ENCODE measurements at regions of chr18 and their contacts with region 1.

Region 1: GRCh38 chr18:55384551-55385275 is 203.3 kb downstream of the TCF4 start:
- DNase-seq: peak in 2 of 10 donors; percentile 51 to 58
- H3K4me3 ChIP-seq: peak overlapping the region in 1 of 59 donors; percentile 1
- H3K27ac ChIP-seq: peak overlapping the region in 58 of 59 donors; percentile 50 to 92 (median 84)
- H3K27me3 ChIP-seq: no peaks in the 10 kb centered on the region
- CTCF ChIP-seq: peak; percentile 34 to 79 (median 68)

Region 2: GRCh38 chr18:55351980-55352714 is 32.6 kb before region 1 on chr18:
- intact Hi-C with region 1: loop called in 1 of 2 experiments (anchors 5 kb)
- DNase-seq: no peak
- H3K4me3 ChIP-seq: peak overlapping the region in 55 of 59 donors; percentile 1 to 62 (median 37)
- H3K27ac ChIP-seq: peak overlapping the region; percentile 66 to 100 (median 95)
- H3K27me3 ChIP-seq: no peaks in the 10 kb centered on the region
- CTCF ChIP-seq: no peak